Adrenal gland (tissue), 19 donors: ENCODE measurements at regions of chr2 and their contacts with region 1.

Region 1: GRCh38 chr2:48107326-48107925 is 201.1 kb upstream of the FBXO11 start:
- DNase-seq: peak in 4 of 7 donors; percentile 32 to 56 (median 36)
- H3K4me3 ChIP-seq: no peak overlapping the region
- H3K27ac ChIP-seq: peak overlapping the region in 2 of 5 donors; percentile 61
- H3K4me1 ChIP-seq: peaks cover 10 to 16% of the 10 kb centered on the region in 2 donors
- H3K27me3 ChIP-seq: no peaks in the 10 kb centered on the region
- CTCF ChIP-seq: no peak
- POLR2A ChIP-seq: no peak

Region 2: GRCh38 chr2:47198985-47199451 is 908.4 kb before region 1 on chr2:
- intact Hi-C with region 1: no loop called
- DNase-seq: no peak
- H3K4me3 ChIP-seq: no peak overlapping the region
- H3K27ac ChIP-seq: no peak overlapping the region
- H3K4me1 ChIP-seq: peaks cover 0 to 3% of the 10 kb centered on the region in 2 donors
- H3K27me3 ChIP-seq: no peaks in the 10 kb centered on the region
- CTCF ChIP-seq: no peak
- POLR2A ChIP-seq: no peak

Region 3: DNA sequence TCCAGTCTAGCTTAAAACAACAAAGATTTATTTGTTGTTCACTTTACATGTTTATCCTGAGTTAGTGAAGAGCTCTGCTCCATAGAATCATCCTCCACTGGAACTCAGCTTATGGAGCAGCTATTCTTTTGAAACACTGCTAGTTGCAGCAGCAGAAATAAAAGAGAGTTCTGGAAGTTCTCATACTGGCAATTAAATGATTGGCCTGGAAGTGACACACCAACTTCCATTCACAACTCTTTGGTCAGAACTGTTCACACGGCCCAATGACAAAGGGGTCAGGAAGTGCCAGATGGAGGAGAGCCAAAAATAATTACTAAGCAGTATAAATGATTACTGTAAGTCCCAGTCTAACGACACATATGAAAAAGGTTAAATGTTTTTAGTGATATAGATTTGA is 240.2 kb before region 1 on chr2:
- intact Hi-C with region 1: loop called in 1 of 2 experiments (anchors 10 kb)
- DNase-seq: peak in 6 of 7 donors; percentile 37 to 71 (median 56)
- H3K4me3 ChIP-seq: no peak overlapping the region
- H3K27ac ChIP-seq: peak overlapping the region in 1 of 5 donors; percentile 22
- H3K4me1 ChIP-seq: peaks cover 10 to 38% of the 10 kb centered on the region in 2 donors
- H3K27me3 ChIP-seq: no peaks in the 10 kb centered on the region
- CTCF ChIP-seq: no peak
- POLR2A ChIP-seq: no peak

Region 4: GRCh38 chr2:48205137-48205798 is 97.8 kb after region 1 on chr2:
- intact Hi-C with region 1: no loop called
- DNase-seq: no peak
- H3K4me3 ChIP-seq: no peak overlapping the region
- H3K27ac ChIP-seq: no peak overlapping the region
- H3K4me1 ChIP-seq: no peaks in the 10 kb centered on the region
- H3K27me3 ChIP-seq: no peaks in the 10 kb centered on the region
- CTCF ChIP-seq: peak in 1 of 6 experiments; percentile 21
- POLR2A ChIP-seq: no peak

Region 5: DNA sequence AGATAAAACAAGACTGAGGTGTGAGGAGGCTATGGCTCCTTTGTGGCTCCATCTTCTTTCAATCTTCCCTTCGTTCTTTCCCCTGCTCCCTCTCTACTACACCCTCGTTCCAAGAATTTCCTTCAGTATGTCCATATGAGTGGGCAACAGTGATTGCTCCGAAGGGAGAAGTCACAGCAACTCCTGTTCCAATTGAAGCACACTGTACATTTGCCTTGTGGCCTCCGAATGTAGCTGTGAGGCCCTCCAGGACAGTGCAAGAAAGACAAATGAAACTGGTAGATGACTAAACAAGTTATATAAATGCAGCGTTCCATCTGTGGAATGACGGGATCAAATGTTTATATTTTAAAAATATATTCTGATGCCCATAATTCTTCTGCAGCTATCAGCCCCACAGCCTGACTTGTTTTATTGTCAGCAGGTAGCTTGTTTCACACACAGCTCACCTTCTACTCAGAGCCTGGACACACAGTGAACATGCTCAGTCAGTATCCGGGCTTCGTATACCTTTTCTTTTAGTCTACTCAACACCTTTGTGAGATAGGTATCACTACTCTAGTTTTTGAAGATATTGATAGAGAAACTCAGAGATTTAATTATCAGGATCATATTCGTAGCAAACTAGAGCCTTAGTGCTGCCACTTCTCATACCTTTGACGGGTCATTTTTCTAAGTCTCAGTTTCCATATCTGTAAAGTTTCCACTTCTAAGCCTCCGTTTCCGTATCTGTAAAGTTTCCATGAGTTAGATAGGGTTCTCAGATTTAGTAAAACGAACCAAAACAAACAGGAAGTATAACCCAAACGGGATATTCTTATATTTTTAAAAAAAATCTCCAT is 205.8 kb after region 1 on chr2:
- intact Hi-C with region 1: no loop called
- DNase-seq: no peak
- H3K4me3 ChIP-seq: peak overlapping the region in 2 of 4 donors; percentile 82 to 98
- H3K27ac ChIP-seq: peak overlapping the region; percentile 62 to 97 (median 94)
- H3K4me1 ChIP-seq: peaks cover 0 to 22% of the 10 kb centered on the region in 2 donors
- H3K27me3 ChIP-seq: no peaks in the 10 kb centered on the region
- CTCF ChIP-seq: no peak
- POLR2A ChIP-seq: no peak

Region 6: GRCh38 chr2:48369971-48370370 is 262.5 kb after region 1 on chr2:
- intact Hi-C with region 1: no loop called
- DNase-seq: no peak
- H3K4me3 ChIP-seq: no peak overlapping the region
- H3K27ac ChIP-seq: no peak overlapping the region
- H3K4me1 ChIP-seq: no peaks in the 10 kb centered on the region
- H3K27me3 ChIP-seq: no peaks in the 10 kb centered on the region
- CTCF ChIP-seq: no peak
- POLR2A ChIP-seq: no peak